Naive thymus-derived CD4-positive, alpha-beta T cell (primary cell): ENCODE measurements at regions of chr22 and their contacts with region 1.

Region 1: GRCh38 chr22:37260901-37261336 is 16.9 kb upstream of the RAC2 start:
- DNase-seq: peak; percentile 46 to 71 (median 64)
- ATAC-seq: peak; percentile 91
- H3K4me3 ChIP-seq: no peak overlapping the region
- H3K4me3 Mint-ChIP-seq: peak overlapping the region in 6 of 10 donors; percentile 1 to 33 (median 15)
- H3K27ac ChIP-seq: no peak overlapping the region
- H3K27ac Mint-ChIP-seq: peak overlapping the region in 8 of 9 donors; percentile 7 to 86 (median 56)
- H3K4me1 ChIP-seq: peaks cover 7 to 24% of the 10 kb centered on the region in 2 donors
- H3K4me1 Mint-ChIP-seq: peaks cover 23 to 32% (median 27%) of the 10 kb centered on the region in 7 donors
- H3K27me3 ChIP-seq: no peaks in the 10 kb centered on the region
- H3K27me3 Mint-ChIP-seq: peaks cover 0 to 13% (median 0%) of the 10 kb centered on the region in 5 donors

Region 2: GRCh38 chr22:36757668-36758211 is 503.2 kb before region 1 on chr22:
- CTCF ChIA-PET with region 1: no interaction called
- POLR2A ChIA-PET with region 1: no interaction called
- intact Hi-C with region 1: no loop called
- DNase-seq: peak; percentile 32 to 75 (median 60)
- ATAC-seq: peak; percentile 89
- H3K4me3 ChIP-seq: no peak overlapping the region
- H3K4me3 Mint-ChIP-seq: no peak overlapping the region
- H3K27ac ChIP-seq: no peak overlapping the region
- H3K27ac Mint-ChIP-seq: peak overlapping the region in 1 of 9 donors; percentile 38
- H3K4me1 ChIP-seq: peaks cover 0 to 5% of the 10 kb centered on the region in 2 donors
- H3K4me1 Mint-ChIP-seq: peaks cover 0 to 22% (median 10%) of the 10 kb centered on the region in 7 donors
- H3K27me3 ChIP-seq: no peaks in the 10 kb centered on the region
- H3K27me3 Mint-ChIP-seq: peaks cover 1 to 11% (median 6%) of the 10 kb centered on the region in 5 donors

Region 3: DNA sequence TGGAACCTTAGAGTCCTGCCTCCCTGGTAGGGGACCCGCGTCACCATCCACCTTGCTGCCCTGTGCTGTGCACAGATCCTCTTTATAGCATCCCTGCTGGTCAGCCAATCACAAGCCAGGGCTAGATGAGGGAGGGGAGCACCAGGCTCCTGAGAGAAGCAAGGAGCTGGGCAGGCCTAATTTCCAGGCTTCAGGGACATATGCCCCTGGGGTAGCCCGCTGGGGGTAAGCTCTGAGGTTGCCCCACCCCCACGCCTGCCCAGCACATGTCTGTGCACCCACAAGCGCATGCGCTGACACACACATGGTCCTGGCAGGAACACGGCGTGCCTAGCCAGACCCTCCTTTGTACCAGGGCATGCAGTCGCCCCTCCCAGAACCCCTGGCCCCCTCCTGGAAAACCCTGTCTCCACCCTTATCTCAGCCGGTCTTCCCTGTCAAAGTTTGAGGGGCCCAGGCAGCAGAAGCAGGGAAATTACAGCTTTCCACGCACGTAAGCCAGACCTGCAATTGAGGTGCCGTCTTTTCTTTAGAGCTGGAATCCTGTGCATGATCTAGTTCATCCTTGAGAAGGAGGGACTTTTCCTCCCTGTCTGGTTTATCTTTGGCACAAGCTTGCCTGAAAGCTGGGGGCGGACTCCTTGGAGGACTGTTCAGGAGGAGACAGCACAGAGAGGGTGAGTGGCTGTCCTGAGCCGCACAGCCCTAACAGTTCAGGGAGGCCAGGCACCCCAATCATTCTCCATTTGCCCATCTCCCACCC is 50.7 kb before region 1 on chr22:
- CTCF ChIA-PET with region 1: interaction called, 49 read pairs
- POLR2A ChIA-PET with region 1: interaction called, 4 read pairs
- intact Hi-C with region 1: loop called in 1 of 2 experiments (anchors 2 kb)
- DNase-seq: no peak
- ATAC-seq: no peak
- H3K4me3 ChIP-seq: no peak overlapping the region
- H3K4me3 Mint-ChIP-seq: no peak overlapping the region
- H3K27ac ChIP-seq: peak overlapping the region; percentile 11
- H3K27ac Mint-ChIP-seq: peak overlapping the region; percentile 19 to 94 (median 80)
- H3K4me1 ChIP-seq: peaks cover 0 to 24% of the 10 kb centered on the region in 2 donors
- H3K4me1 Mint-ChIP-seq: peaks cover 22 to 85% (median 75%) of the 10 kb centered on the region in 7 donors
- H3K27me3 ChIP-seq: no peaks in the 10 kb centered on the region
- H3K27me3 Mint-ChIP-seq: no peaks in the 10 kb centered on the region

Region 4: DNA sequence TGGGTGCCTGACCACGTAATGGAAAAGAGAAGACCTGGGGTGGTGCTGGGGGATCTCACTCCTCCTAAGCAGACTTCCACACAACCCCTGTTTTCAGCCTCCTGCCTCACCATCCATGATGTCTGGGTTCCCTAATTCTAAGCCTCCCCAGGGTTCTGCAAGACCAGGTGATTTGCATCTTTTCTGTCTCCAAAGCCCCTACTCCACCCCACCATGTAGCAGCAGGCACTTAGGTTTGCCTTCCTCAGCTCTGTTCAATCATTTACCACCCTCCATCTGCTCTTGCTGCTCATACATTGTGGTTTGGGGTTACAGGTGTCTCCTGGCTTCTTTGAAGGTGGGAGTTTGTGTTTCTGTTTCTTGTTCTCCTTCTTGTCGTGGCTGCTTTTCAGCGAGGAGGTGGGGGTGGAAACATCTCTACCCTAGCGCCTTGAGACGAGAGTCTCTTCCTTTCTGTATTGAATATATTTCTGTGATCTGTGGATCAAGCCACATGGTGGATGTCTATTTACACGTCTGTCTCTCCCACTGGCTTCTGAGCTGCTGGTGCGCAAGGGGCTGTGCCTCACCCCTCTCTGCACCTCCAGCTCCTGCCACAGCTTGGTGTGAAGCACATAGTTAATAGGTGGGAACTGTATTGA is 42.0 kb before region 1 on chr22:
- CTCF ChIA-PET with region 1: interaction called, 49 read pairs
- POLR2A ChIA-PET with region 1: interaction called, 21 read pairs
- intact Hi-C with region 1: loop called in 1 of 2 experiments (anchors 1 kb)
- DNase-seq: peak in 8 of 9 donors; percentile 59 to 97 (median 94)
- ATAC-seq: peak; percentile 89
- H3K4me3 ChIP-seq: peak overlapping the region; percentile 55
- H3K4me3 Mint-ChIP-seq: peak overlapping the region; percentile 74 to 92 (median 83)
- H3K27ac ChIP-seq: peak overlapping the region; percentile 77
- H3K27ac Mint-ChIP-seq: peak overlapping the region; percentile 79 to 99 (median 91)
- H3K4me1 ChIP-seq: peaks cover 61 to 76% of the 10 kb centered on the region in 2 donors
- H3K4me1 Mint-ChIP-seq: peaks cover 62 to 99% (median 92%) of the 10 kb centered on the region in 7 donors
- H3K27me3 ChIP-seq: no peaks in the 10 kb centered on the region
- H3K27me3 Mint-ChIP-seq: no peaks in the 10 kb centered on the region